Psoas muscle (tissue), 8 donors: ENCODE measurements at regions of chr2 and their contacts with region 1.

Region 1: GRCh38 chr2:112606488-112606902 is 22.1 kb downstream of the CHCHD5 start:
- DNase-seq: no peak
- ATAC-seq: no peak
- H3K4me3 ChIP-seq: no peak overlapping the region
- H3K27ac ChIP-seq: no peak overlapping the region
- H3K4me1 ChIP-seq: no peaks in the 10 kb centered on the region
- H3K27me3 ChIP-seq: no peaks in the 10 kb centered on the region
- CTCF ChIP-seq: no peak

Region 2: GRCh38 chr2:112645310-112646101 is 39.0 kb after region 1 on chr2 and contains the start of gene SLC20A1:
- intact Hi-C with region 1: loop called in 1 of 2 experiments (anchors 5 kb)
- DNase-seq: peak; percentile 97 to 99
- ATAC-seq: peak; percentile 97 to 98 (median 98)
- H3K4me3 ChIP-seq: peak within 1 kb of the TSS; percentile 99
- H3K27ac ChIP-seq: peak within 1 kb of the TSS; percentile 95
- H3K4me1 ChIP-seq: peaks cover 38% of the 10 kb centered on the region
- H3K27me3 ChIP-seq: no peaks in the 10 kb centered on the region
- CTCF ChIP-seq: peak; percentile 38
- total RNA-seq, gene SLC20A1: 11.8 to 23.6 (median 17.8) TPM

Region 3: DNA sequence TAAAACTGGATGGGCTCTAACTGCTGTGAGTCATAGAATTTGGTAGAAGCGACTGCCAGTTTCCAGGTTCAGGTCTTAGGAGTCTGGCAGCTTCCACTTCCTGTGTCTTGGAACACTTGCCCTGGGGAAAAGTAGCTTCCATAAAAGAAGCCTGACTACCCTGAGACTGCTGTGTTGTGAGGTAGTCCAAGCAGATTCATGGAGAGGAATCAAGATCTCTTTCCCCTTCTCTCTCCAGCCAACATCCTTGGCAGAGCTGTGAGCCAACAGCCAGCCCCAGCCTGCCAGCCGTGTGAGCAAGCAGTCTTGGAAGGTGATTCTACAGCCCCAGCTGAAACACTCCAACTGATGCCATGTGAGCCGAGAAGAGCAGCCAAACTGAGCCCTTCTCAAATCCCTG is 73.0 kb after region 1 on chr2:
- intact Hi-C with region 1: no loop called
- DNase-seq: peak; percentile 34 to 80
- ATAC-seq: peak; percentile 79 to 97 (median 94)
- H3K4me3 ChIP-seq: no peak overlapping the region
- H3K27ac ChIP-seq: peak overlapping the region; percentile 66
- H3K4me1 ChIP-seq: peaks cover 20% of the 10 kb centered on the region
- H3K27me3 ChIP-seq: no peaks in the 10 kb centered on the region
- CTCF ChIP-seq: no peak

Region 4: GRCh38 chr2:112692496-112692911 is 86.0 kb after region 1 on chr2:
- intact Hi-C with region 1: loop called in 1 of 2 experiments (anchors 5 kb)
- DNase-seq: peak in 1 of 2 donors; percentile 27
- ATAC-seq: peak; percentile 23 to 49 (median 30)
- H3K4me3 ChIP-seq: no peak overlapping the region
- H3K27ac ChIP-seq: no peak overlapping the region
- H3K4me1 ChIP-seq: no peaks in the 10 kb centered on the region
- H3K27me3 ChIP-seq: no peaks in the 10 kb centered on the region
- CTCF ChIP-seq: no peak

Region 5: GRCh38 chr2:112726497-112727190 is 120.1 kb after region 1 on chr2:
- intact Hi-C with region 1: loop called in 1 of 2 experiments (anchors 5 kb)
- DNase-seq: peak; percentile 89 to 92
- ATAC-seq: peak; percentile 91 to 99 (median 92)
- H3K4me3 ChIP-seq: no peak overlapping the region
- H3K27ac ChIP-seq: no peak overlapping the region
- H3K4me1 ChIP-seq: no peaks in the 10 kb centered on the region
- H3K27me3 ChIP-seq: no peaks in the 10 kb centered on the region
- CTCF ChIP-seq: peak; percentile 92

Region 6: DNA sequence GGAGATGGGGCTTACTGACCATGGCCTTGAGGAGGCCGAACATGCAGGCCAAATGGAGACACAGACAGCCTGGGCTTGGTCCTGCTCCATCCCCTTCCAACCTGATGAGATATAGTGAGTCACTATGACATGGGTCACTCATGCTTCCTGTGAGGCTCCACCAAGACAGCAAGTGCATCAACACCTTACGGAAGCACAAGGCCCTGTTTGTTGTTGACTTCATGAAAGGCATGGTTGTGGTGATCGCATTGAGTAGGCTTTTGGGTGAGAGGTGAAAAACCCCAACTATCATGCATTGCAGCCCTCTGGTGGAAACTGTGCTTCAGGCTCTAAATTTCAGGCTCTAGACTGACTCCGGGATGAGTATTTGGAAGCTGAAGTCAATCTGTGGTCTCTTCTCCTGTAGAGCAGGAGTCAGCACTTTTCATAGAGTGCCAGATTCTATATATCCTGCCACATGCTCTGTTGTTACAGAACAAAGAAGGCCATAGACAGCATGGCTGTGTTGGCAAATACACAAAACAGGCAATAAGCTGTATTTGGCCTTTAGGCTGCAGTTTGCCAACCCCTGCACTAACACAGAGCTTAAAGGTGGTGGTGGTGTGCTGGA is 314.5 kb after region 1 on chr2:
- intact Hi-C with region 1: no loop called
- DNase-seq: no peak
- ATAC-seq: no peak
- H3K4me3 ChIP-seq: no peak overlapping the region
- H3K27ac ChIP-seq: no peak overlapping the region
- H3K4me1 ChIP-seq: no peaks in the 10 kb centered on the region
- H3K27me3 ChIP-seq: no peaks in the 10 kb centered on the region
- CTCF ChIP-seq: no peak

Region 7: GRCh38 chr2:112958428-112959108 is 352.1 kb after region 1 on chr2:
- intact Hi-C with region 1: loop called in 1 of 2 experiments (anchors 10 kb)
- DNase-seq: no peak
- ATAC-seq: peak in 1 of 4 donors; percentile 41
- H3K4me3 ChIP-seq: no peak overlapping the region
- H3K27ac ChIP-seq: no peak overlapping the region
- H3K4me1 ChIP-seq: no peaks in the 10 kb centered on the region
- H3K27me3 ChIP-seq: peaks cover 0 to 6% (median 0%) of the 10 kb centered on the region in 3 donors
- CTCF ChIP-seq: peak; percentile 55